Breast epithelium (tissue), 4 donors: ENCODE measurements at regions of chr1 and their contacts with region 1.

Region 1: DNA sequence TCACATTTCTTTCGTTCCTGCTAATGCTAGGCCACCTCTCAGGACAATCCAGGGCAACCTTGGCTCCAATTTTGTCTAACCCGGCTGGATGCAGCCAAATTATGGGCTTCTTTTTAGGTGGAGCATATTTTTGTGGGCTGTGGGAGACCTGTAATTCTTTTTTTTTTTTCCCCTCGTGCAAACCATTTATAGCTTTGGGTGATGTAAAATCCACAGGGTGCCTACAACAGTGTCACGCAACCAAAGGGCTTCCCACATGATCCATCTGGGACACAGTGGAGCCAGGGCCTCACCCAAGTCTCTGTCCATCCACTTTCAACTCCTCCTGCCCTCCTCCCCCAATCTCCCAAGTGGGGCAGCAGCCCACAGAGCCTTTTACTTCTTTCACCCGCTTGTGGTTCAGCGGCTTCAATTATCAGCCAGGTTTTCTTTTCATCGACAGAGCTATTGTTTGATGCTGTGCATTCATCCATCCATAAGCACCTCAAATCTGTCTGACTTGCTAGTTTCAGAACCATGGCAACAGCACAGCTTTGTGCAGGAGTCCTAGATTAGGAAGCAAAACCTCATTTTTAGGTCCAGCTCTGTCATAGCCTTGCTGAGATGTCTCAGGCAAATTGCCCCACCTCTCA is 10.0 kb upstream of the OVAAL start:
- DNase-seq: no peak
- H3K4me3 ChIP-seq: no peak overlapping the region
- H3K27ac ChIP-seq: no peak overlapping the region
- H3K4me1 ChIP-seq: no peaks in the 10 kb centered on the region
- H3K27me3 ChIP-seq: no peaks in the 10 kb centered on the region
- CTCF ChIP-seq: no peak
- POLR2A ChIP-seq: no peak

Region 2: DNA sequence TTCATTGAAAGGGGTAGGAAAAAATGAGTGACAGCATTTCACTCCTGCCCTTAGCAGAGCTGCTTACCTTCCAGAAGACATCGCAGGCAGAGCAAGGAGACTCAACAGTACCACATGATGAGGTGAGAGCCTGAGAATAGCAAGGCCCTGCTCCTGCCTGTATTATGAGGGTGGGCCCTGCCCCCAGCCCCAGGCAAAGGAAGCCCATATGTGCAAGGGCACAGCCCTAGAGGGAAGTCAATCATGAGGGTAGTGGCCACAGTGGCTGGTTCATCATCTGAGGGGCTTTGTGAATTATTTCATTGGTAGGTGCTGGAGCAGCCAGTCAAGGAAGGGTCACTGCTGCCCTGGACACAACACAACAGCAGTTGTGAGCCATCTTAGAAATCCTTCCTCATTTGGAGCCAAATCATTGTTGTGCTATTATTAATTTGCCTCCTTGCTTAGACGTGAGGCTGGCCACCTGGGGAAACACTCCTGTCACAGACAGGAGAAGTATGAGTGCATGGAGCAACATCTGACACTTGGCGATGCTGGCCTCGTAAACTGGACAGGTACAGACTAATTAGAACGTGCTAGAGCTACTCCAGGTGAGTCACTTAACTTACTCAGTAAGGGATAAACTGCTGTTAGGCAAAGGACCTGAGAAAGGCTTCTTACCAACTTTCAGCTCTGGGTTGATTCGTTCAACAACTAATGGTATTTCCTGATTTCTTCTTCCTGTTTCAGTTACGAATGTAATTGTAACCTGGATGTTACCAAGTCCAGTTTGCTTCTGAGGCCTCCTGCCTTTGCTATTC is 23.7 kb before region 1 on chr1:
- intact Hi-C with region 1: loop called (anchors 1 kb)
- DNase-seq: no peak
- H3K4me3 ChIP-seq: no peak overlapping the region
- H3K27ac ChIP-seq: peak overlapping the region in 1 of 2 donors; percentile 59
- H3K4me1 ChIP-seq: no peaks in the 10 kb centered on the region
- H3K27me3 ChIP-seq: no peaks in the 10 kb centered on the region
- CTCF ChIP-seq: no peak
- POLR2A ChIP-seq: no peak

Region 3: DNA sequence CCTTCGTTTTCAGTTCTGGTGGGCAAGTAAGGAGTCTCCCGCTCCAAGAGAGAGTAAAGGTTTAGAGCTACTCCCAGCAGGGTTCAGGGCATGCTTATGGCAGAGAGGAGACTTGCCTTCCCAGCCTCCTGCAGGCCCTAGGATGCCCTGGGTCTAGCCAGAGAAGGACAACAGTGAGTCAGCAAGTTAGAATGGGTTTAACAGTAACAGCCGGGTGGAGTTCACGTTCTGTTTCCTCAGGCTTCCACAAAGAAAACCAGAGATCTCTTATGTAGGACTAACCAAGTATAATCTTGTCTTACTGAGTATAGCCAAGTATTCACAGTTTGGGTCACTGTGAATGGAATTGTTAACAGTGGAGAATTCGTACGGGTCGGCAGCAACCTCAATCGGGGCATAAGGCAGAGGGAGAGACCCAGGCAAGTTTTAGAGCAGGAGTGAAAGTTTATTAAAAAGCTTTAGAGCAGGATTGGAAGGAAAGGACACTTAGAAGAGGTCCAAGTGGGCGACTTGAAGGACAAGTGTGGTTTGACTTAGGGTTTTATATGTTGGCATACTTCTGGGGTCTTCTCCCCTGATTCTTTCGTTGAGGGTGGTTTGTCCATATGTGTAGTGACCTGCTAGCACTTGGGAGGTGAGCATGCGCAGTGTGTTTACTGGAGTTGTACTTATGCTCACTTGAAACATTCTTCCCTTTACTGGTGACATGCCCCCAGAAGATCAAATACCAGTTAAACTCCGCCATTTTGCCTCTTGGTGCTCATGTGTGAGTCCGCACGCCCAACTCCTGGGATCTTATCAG is 14.4 kb after region 1 on chr1:
- intact Hi-C with region 1: no loop called
- DNase-seq: no peak
- H3K4me3 ChIP-seq: no peak overlapping the region
- H3K27ac ChIP-seq: no peak overlapping the region
- H3K4me1 ChIP-seq: no peaks in the 10 kb centered on the region
- H3K27me3 ChIP-seq: no peaks in the 10 kb centered on the region
- CTCF ChIP-seq: no peak
- POLR2A ChIP-seq: no peak